ENCODE measurements at regions of chrX and their contacts with region 1.

Region 1: DNA sequence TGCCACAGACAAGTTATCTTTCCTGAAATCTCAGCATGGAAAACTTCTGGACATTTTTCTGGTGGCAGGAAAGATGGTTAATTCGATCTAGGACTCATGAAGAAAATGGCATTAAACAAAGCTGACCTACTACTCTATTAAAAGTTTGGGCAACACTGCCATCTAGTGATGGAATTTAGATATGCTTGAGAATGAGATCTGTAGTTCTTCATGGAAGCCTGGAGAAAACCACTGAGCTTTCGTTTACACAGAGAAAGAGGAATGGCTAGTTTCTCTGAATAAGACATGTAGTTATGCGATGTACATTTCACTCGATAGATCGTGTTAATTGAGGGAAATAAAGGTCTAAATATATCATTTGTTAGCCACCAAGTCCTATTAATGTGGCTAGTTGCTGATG is 51.7 kb upstream of the CHRDL1 start:
- DNase-seq: peak; percentile 18 to 58
- H3K4me3 ChIP-seq: no peak overlapping the region
- H3K27ac ChIP-seq: no peak overlapping the region
- H3K4me1 ChIP-seq: peaks cover 15% of the 10 kb centered on the region
- H3K27me3 ChIP-seq: no peaks in the 10 kb centered on the region
- CTCF ChIP-seq: peak; percentile 81

Region 2: GRCh38 chrX:110163488-110163887 is 683.8 kb before region 1 on chrX:
- CTCF ChIA-PET with region 1: no interaction called
- POLR2A ChIA-PET with region 1: no interaction called
- intact Hi-C with region 1: loop called (anchors 5 kb)
- DNase-seq: peak in 1 of 2 experiments; percentile 80
- H3K4me3 ChIP-seq: no peak overlapping the region; the same call in 1 of the 2 replicates
- H3K27ac ChIP-seq: peak overlapping the region; percentile 75
- H3K4me1 ChIP-seq: peaks cover 49% of the 10 kb centered on the region
- H3K27me3 ChIP-seq: no peaks in the 10 kb centered on the region
- CTCF ChIP-seq: no peak

Region 3: GRCh38 chrX:110450050-110450449 is 397.3 kb before region 1 on chrX:
- CTCF ChIA-PET with region 1: interaction called, 3 read pairs
- POLR2A ChIA-PET with region 1: no interaction called
- intact Hi-C with region 1: loop called (anchors 1 kb)
- DNase-seq: peak; percentile 55 to 75
- H3K4me3 ChIP-seq: no peak overlapping the region
- H3K27ac ChIP-seq: no peak overlapping the region
- H3K4me1 ChIP-seq: no peaks in the 10 kb centered on the region
- H3K27me3 ChIP-seq: peaks cover 47% of the 10 kb centered on the region
- CTCF ChIP-seq: peak; percentile 89

Region 4: DNA sequence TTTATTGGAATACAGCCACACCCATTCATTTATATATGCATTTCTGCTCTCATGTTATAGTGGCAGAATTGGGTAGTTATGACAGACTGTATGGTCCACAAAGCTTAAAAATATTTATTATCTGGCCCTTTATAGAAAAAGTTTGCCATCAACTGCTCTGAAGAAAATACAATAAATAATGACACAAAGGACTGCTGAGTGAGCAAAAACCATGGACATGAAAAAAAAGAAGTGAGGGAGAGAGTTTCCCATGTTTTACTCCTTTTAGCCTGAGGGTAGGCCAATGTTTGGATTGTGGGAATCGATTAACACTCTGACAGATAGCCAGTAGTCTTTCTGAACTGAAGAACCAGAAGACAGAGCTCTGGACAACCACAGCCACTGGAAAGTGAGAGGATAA is 200.9 kb before region 1 on chrX:
- CTCF ChIA-PET with region 1: no interaction called
- POLR2A ChIA-PET with region 1: no interaction called
- intact Hi-C with region 1: no loop called
- DNase-seq: no peak
- H3K4me3 ChIP-seq: no peak overlapping the region
- H3K27ac ChIP-seq: no peak overlapping the region
- H3K4me1 ChIP-seq: no peaks in the 10 kb centered on the region
- H3K27me3 ChIP-seq: no peaks in the 10 kb centered on the region
- CTCF ChIP-seq: no peak

Region 5: GRCh38 chrX:110665223-110666002 is 181.9 kb before region 1 on chrX:
- CTCF ChIA-PET with region 1: no interaction called
- POLR2A ChIA-PET with region 1: no interaction called
- intact Hi-C with region 1: loop called (anchors 2 kb)
- DNase-seq: peak in 1 of 2 experiments; percentile 38
- H3K4me3 ChIP-seq: no peak overlapping the region
- H3K27ac ChIP-seq: no peak overlapping the region
- H3K4me1 ChIP-seq: no peaks in the 10 kb centered on the region
- H3K27me3 ChIP-seq: no peaks in the 10 kb centered on the region
- CTCF ChIP-seq: peak; percentile 74

Region 6: DNA sequence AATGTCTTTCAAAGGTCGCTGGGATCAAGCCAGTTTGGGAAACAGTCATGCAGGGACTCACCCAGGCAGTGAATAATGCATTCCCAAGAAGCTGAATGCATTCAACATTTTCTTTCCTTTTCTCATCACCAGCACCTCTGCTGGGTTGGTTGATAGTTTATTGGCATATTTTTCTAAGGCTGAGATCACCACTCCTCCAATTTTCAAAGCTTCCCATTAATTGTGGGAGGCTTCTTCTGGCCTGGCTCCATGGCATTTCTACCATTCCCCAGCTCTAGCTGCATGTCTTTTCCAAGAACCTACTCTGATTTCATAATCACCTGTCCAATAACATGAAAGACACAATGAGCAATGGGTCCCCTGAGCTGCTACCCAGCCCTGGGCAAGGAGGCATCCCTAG is 87.5 kb before region 1 on chrX:
- CTCF ChIA-PET with region 1: no interaction called
- POLR2A ChIA-PET with region 1: no interaction called
- intact Hi-C with region 1: loop called (anchors 1 kb)
- DNase-seq: no peak
- H3K4me3 ChIP-seq: no peak overlapping the region
- H3K27ac ChIP-seq: no peak overlapping the region
- H3K4me1 ChIP-seq: peaks cover 18% of the 10 kb centered on the region
- H3K27me3 ChIP-seq: no peaks in the 10 kb centered on the region
- CTCF ChIP-seq: no peak